Activated B cell treated with CpG ODN at 0.5 μM for 24 hours (primary cell): ENCODE measurements at regions of chr1 and their contacts with region 1.

Region 1: DNA sequence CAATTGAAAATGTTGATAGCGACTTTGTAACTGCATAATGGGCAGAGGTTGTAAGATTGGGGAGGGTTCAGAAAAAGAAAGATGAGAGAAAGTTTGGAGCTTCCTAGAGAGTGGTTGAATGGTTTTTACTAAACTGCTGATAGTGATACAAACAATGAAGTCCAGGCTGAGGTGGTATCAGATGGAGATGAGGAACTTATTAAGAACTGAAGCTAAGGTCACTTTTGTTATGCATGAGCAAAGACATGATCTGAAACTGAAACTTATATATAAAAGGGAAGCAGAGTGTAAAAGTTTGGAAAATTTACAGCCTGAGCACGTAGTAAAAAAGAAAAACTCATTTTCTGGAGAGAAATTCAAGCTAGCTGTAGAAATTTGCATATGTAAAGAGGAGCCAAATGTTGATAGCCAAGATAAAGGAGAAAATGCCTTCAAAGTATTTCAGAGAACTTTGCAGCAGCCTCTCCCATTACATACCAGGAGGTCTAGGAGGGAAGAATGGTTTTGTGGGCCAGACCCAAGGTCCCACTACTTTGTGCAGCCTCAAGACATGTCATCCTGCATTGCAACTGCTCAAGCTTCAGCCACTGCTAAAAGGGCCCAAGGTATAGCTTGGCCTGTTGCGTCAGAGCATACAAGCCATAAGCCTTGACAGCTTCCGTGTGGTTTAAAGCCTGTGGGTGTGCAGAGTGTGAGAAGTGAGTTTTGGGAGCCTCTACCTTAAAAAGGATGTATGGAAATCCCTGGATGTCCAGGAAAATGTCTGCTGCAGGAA is 843.9 kb downstream of the AMY1C start:
- DNase-seq: no peak
- ATAC-seq: peak; percentile 78
- H3K4me3 Mint-ChIP-seq: peak overlapping the region; percentile 32
- H3K27ac Mint-ChIP-seq: peak overlapping the region; percentile 91
- H3K4me1 Mint-ChIP-seq: peaks cover 26% of the 10 kb centered on the region
- H3K27me3 Mint-ChIP-seq: no peaks in the 10 kb centered on the region
- CTCF ChIP-seq: no peak

Region 2: GRCh38 chr1:104459886-104460285 is 133.7 kb before region 1 on chr1:
- CTCF ChIA-PET with region 1: no interaction called
- POLR2A ChIA-PET with region 1: no interaction called
- intact Hi-C with region 1: no loop called
- DNase-seq: no peak
- ATAC-seq: no peak
- H3K4me3 Mint-ChIP-seq: no peak overlapping the region
- H3K27ac Mint-ChIP-seq: no peak overlapping the region
- H3K4me1 Mint-ChIP-seq: no peaks in the 10 kb centered on the region
- H3K27me3 Mint-ChIP-seq: no peaks in the 10 kb centered on the region
- CTCF ChIP-seq: no peak

Region 3: GRCh38 chr1:104706631-104707147 is 113.1 kb after region 1 on chr1:
- CTCF ChIA-PET with region 1: no interaction called
- POLR2A ChIA-PET with region 1: no interaction called
- intact Hi-C with region 1: loop called (anchors 2 kb)
- DNase-seq: no peak
- ATAC-seq: peak; percentile 21
- H3K4me3 Mint-ChIP-seq: no peak overlapping the region
- H3K27ac Mint-ChIP-seq: no peak overlapping the region
- H3K4me1 Mint-ChIP-seq: peaks cover 9% of the 10 kb centered on the region
- H3K27me3 Mint-ChIP-seq: no peaks in the 10 kb centered on the region
- CTCF ChIP-seq: no peak

Region 4: DNA sequence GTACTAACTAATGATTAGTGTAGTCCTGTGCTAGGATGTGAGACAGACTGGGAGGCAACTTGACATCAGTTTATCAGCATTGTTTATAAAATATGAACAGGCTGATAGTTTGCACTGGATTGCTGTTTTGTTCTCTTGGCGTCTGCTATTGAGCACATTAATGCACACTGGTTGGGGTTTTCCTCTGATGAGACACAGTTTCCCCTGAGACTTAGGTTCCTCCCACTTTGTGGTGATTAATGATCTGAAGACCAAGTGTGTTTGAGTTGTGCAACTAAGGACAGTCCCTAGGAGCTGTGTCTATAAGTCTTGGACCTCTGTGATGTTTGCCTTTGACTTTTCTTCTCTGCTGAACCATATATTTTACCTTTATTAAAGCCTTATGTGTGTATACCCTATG is 171.5 kb after region 1 on chr1:
- CTCF ChIA-PET with region 1: no interaction called
- POLR2A ChIA-PET with region 1: interaction called, 3 read pairs
- intact Hi-C with region 1: loop called (anchors 1 kb)
- DNase-seq: no peak
- ATAC-seq: peak; percentile 94
- H3K4me3 Mint-ChIP-seq: no peak overlapping the region
- H3K27ac Mint-ChIP-seq: peak overlapping the region; percentile 31
- H3K4me1 Mint-ChIP-seq: peaks cover 29% of the 10 kb centered on the region
- H3K27me3 Mint-ChIP-seq: no peaks in the 10 kb centered on the region
- CTCF ChIP-seq: no peak